ENCODE measurements at regions of chr2 and their contacts with region 1.

Region 1: GRCh38 chr2:156332534-156333273 is at the start of gene NR4A2:
- DNase-seq: peak; percentile 83 to 95 (median 90)
- ATAC-seq: peak; percentile 72
- H3K4me3 ChIP-seq: peak within 1 kb of the TSS; percentile 90
- H3K4me3 Mint-ChIP-seq: peak within 1 kb of the TSS; percentile 90 to 99 (median 96)
- H3K27ac ChIP-seq: peak within 1 kb of the TSS; percentile 100
- H3K27ac Mint-ChIP-seq: peak within 1 kb of the TSS; percentile 92 to 100 (median 99)
- H3K4me1 ChIP-seq: peaks cover 0 to 4% of the 10 kb centered on the region in 2 donors
- H3K4me1 Mint-ChIP-seq: peaks cover 27 to 47% (median 40%) of the 10 kb centered on the region in 7 donors
- H3K27me3 ChIP-seq: no peaks in the 10 kb centered on the region
- H3K27me3 Mint-ChIP-seq: peaks cover 9 to 27% (median 16%) of the 10 kb centered on the region in 5 donors
- total RNA-seq, gene NR4A2: 2.2 to 252 (median 3.2) TPM

Region 2: GRCh38 chr2:155368934-155369333 is 963.8 kb before region 1 on chr2:
- CTCF ChIA-PET with region 1: no interaction called
- POLR2A ChIA-PET with region 1: no interaction called
- intact Hi-C with region 1: loop called in 1 of 2 experiments (anchors 5 kb)
- DNase-seq: peak in 2 of 9 donors; percentile 5 to 6
- ATAC-seq: no peak
- H3K4me3 ChIP-seq: no peak overlapping the region
- H3K4me3 Mint-ChIP-seq: no peak overlapping the region
- H3K27ac ChIP-seq: no peak overlapping the region
- H3K27ac Mint-ChIP-seq: no peak overlapping the region
- H3K4me1 ChIP-seq: no peaks in the 10 kb centered on the region
- H3K4me1 Mint-ChIP-seq: no peaks in the 10 kb centered on the region
- H3K27me3 ChIP-seq: no peaks in the 10 kb centered on the region
- H3K27me3 Mint-ChIP-seq: peaks cover 1 to 8% (median 6%) of the 10 kb centered on the region in 5 donors

Region 3: GRCh38 chr2:156229724-156230362 is 102.9 kb before region 1 on chr2:
- CTCF ChIA-PET with region 1: no interaction called
- POLR2A ChIA-PET with region 1: no interaction called
- intact Hi-C with region 1: no loop called
- DNase-seq: no peak
- ATAC-seq: no peak
- H3K4me3 ChIP-seq: no peak overlapping the region
- H3K4me3 Mint-ChIP-seq: no peak overlapping the region
- H3K27ac ChIP-seq: no peak overlapping the region
- H3K27ac Mint-ChIP-seq: no peak overlapping the region
- H3K4me1 ChIP-seq: no peaks in the 10 kb centered on the region
- H3K4me1 Mint-ChIP-seq: no peaks in the 10 kb centered on the region
- H3K27me3 ChIP-seq: no peaks in the 10 kb centered on the region
- H3K27me3 Mint-ChIP-seq: peaks cover 0 to 20% (median 12%) of the 10 kb centered on the region in 5 donors

Region 4: DNA sequence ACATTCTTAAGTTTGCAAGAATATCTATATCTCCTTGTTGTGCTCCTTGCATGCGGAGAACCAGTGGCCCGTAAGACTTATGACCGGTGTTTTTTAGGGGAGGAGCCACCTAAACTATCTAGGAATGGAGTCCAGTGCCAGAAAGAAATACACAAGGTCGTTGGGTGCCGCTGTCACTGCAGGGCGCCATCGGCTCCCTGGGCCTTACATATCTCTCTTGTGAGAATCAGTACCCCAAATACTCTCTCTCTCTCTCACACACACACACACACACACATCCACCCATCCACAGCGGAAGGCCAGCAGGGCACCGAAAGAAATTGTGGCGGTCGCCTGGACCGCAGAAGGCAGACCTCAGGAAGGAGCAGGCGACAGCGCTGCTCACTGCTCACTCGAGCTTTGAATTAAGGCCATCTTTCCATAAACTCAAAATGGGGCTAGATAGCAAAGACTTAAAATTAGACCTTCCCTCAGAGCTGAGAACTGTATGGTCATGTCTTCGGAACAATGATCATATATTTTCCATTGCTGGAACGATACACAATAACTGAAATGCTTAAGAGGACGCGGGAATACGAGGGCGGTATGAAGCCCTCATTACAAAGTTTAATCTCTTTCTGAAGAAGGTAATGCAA is 10.5 kb before region 1 on chr2:
- CTCF ChIA-PET with region 1: interaction called, 6 read pairs
- POLR2A ChIA-PET with region 1: no interaction called
- intact Hi-C with region 1: loop called (anchors 1 kb)
- DNase-seq: peak in 2 of 9 donors; percentile 16 to 24
- ATAC-seq: peak; percentile 33
- H3K4me3 ChIP-seq: peak overlapping the region; percentile 35
- H3K4me3 Mint-ChIP-seq: peak overlapping the region; percentile 55 to 89 (median 78)
- H3K27ac ChIP-seq: no peak overlapping the region
- H3K27ac Mint-ChIP-seq: peak overlapping the region in 3 of 9 donors; percentile 29 to 89 (median 52)
- H3K4me1 ChIP-seq: peaks cover 24 to 25% of the 10 kb centered on the region in 2 donors
- H3K4me1 Mint-ChIP-seq: peaks cover 24 to 46% (median 36%) of the 10 kb centered on the region in 7 donors
- H3K27me3 ChIP-seq: peaks cover 5 to 19% of the 10 kb centered on the region in 2 donors
- H3K27me3 Mint-ChIP-seq: peaks cover 72 to 86% (median 76%) of the 10 kb centered on the region in 5 donors

Region 5: DNA sequence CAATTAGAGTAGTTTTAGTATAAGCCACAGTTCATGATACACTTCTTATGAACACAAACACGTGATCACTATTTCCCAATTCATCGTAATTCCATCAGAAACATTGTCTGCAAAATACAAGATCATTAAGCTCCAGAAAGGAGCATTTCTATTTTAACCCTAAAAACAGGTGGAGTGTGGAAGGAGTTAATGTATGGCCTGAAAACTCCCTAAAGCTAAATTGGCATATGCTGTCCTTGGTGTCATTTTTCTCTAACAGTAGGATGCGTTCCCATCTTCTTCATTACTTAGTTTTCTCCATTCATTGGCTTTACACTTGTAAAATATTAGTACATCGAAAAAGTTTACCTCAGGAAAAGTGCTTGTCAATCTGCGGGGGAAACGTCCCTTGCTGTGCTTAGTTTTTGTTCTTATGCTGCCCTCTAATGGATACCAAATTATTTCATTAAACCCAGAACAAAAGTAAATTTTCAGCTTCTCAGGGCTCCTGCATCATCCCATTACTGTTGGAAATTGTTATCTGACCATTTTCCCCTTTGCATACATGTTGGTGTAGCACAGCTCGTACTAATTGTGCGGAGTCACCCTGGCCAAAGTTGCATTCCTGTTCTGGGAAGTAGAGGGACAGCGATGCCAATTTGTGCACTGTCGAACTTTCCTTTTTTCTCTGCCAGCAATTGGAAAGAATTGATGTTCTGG is 256.8 kb after region 1 on chr2:
- CTCF ChIA-PET with region 1: interaction called, 19 read pairs
- POLR2A ChIA-PET with region 1: interaction called, 4 read pairs
- intact Hi-C with region 1: loop called (anchors 1 kb)
- DNase-seq: peak in 6 of 9 donors; percentile 18 to 55 (median 42)
- ATAC-seq: peak; percentile 63
- H3K4me3 ChIP-seq: no peak overlapping the region
- H3K4me3 Mint-ChIP-seq: no peak overlapping the region
- H3K27ac ChIP-seq: no peak overlapping the region
- H3K27ac Mint-ChIP-seq: no peak overlapping the region
- H3K4me1 ChIP-seq: no peaks in the 10 kb centered on the region
- H3K4me1 Mint-ChIP-seq: peaks cover 0 to 9% (median 4%) of the 10 kb centered on the region in 7 donors
- H3K27me3 ChIP-seq: no peaks in the 10 kb centered on the region
- H3K27me3 Mint-ChIP-seq: no peaks in the 10 kb centered on the region

Region 6: DNA sequence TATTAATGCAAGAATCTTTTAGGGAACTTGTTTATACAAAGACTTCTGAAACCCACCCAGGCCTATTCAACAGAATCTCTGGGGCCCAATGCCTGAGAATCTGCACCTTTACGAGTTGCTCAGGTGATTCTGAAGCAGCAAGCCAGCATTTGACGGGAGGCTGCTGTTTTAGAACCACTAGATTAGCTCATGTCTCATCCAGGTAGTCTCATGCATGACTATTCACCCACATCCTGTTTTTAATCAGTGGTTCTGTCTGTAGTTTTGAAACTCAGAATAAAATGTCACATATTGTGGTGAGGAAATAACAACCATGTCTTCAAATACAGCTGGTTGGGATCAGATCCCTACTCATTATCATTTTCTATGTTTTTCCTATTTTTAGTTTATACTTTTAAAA is 1071.7 kb after region 1 on chr2:
- CTCF ChIA-PET with region 1: no interaction called
- POLR2A ChIA-PET with region 1: no interaction called
- intact Hi-C with region 1: loop called in 1 of 2 experiments (anchors 10 kb)
- DNase-seq: peak in 8 of 9 donors; percentile 44 to 92 (median 88)
- ATAC-seq: peak; percentile 98
- H3K4me3 ChIP-seq: peak overlapping the region; percentile 7
- H3K4me3 Mint-ChIP-seq: peak overlapping the region; percentile 8 to 83 (median 74)
- H3K27ac ChIP-seq: peak overlapping the region; percentile 75
- H3K27ac Mint-ChIP-seq: peak overlapping the region; percentile 91 to 100 (median 99)
- H3K4me1 ChIP-seq: peaks cover 33 to 55% of the 10 kb centered on the region in 2 donors
- H3K4me1 Mint-ChIP-seq: peaks cover 31 to 82% (median 77%) of the 10 kb centered on the region in 7 donors
- H3K27me3 ChIP-seq: no peaks in the 10 kb centered on the region
- H3K27me3 Mint-ChIP-seq: no peaks in the 10 kb centered on the region

Region 7: DNA sequence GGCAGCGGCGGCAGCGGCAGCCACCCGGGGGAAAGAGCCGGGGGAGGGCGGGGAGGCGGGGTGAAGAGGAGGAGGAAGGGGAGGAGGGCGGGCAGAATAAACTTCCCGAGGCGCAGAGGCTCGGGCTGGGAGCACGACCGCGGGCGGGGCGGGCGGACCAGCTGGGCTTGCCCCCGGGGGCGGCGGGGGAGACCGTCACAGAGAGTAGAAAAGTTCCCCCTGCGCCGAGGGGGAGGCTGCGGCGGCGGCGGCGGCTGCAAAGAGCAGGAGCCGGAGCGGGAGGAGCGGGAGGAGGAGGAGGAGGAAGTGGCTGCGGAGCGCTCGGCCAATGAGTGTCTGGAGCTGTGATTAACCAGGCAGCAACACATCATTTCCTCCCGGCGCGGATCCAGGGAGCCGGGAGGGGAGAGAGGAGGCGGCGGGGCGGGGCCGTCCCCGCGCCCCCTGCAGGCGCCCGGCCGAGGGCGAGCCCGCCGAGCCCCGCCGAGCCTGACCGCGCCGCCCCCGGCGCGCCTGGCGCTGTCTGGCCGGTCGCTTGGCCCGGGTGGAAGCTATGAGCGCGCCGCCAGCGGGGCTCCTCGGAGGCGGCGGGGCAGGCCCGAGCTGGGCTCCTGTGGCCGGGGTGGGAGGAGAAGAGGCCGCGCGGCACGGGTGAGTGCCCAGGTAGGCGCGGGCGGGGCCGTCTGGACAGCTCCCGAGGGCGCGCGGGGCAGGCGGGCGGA is 1543.5 kb after region 1 on chr2 and contains the start of gene ACVR1:
- CTCF ChIA-PET with region 1: no interaction called
- POLR2A ChIA-PET with region 1: no interaction called
- intact Hi-C with region 1: loop called (anchors 1 to 2 kb)
- DNase-seq: peak; percentile 68 to 85 (median 75)
- ATAC-seq: peak; percentile 86
- H3K4me3 ChIP-seq: peak within 1 kb of the TSS; percentile 60
- H3K4me3 Mint-ChIP-seq: peak within 1 kb of the TSS; percentile 90 to 98 (median 96)
- H3K27ac ChIP-seq: peak within 1 kb of the TSS; percentile 77
- H3K27ac Mint-ChIP-seq: peak within 1 kb of the TSS; percentile 83 to 96 (median 90)
- H3K4me1 ChIP-seq: peaks cover 12 to 19% of the 10 kb centered on the region in 2 donors
- H3K4me1 Mint-ChIP-seq: peaks cover 24 to 63% (median 53%) of the 10 kb centered on the region in 7 donors
- H3K27me3 ChIP-seq: no peaks in the 10 kb centered on the region
- H3K27me3 Mint-ChIP-seq: no peaks in the 10 kb centered on the region
- total RNA-seq, gene ACVR1: 13.3 to 42.0 (median 20.6) TPM

Measured in naive thymus-derived CD4-positive, alpha-beta T cell (primary cell).